ENCODE measurements at regions of chr9 and their contacts with region 1.

Region 1: GRCh38 chr9:123349691-123350480 is 6.1 kb upstream of the CRB2 start:
- DNase-seq: peak; percentile 68
- H3K4me3 ChIP-seq: no peak overlapping the region
- H3K27ac ChIP-seq: no peak overlapping the region
- H3K4me1 ChIP-seq: no peaks in the 10 kb centered on the region
- H3K27me3 ChIP-seq: no peaks in the 10 kb centered on the region
- CTCF ChIP-seq: peak; percentile 95

Region 2: GRCh38 chr9:123081824-123082223 is 268.1 kb before region 1 on chr9:
- intact Hi-C with region 1: loop called (anchors 5 kb)
- DNase-seq: no peak
- H3K4me3 ChIP-seq: no peak overlapping the region
- H3K27ac ChIP-seq: no peak overlapping the region
- H3K4me1 ChIP-seq: no peaks in the 10 kb centered on the region
- H3K27me3 ChIP-seq: no peaks in the 10 kb centered on the region
- CTCF ChIP-seq: peak; percentile 51

Region 3: DNA sequence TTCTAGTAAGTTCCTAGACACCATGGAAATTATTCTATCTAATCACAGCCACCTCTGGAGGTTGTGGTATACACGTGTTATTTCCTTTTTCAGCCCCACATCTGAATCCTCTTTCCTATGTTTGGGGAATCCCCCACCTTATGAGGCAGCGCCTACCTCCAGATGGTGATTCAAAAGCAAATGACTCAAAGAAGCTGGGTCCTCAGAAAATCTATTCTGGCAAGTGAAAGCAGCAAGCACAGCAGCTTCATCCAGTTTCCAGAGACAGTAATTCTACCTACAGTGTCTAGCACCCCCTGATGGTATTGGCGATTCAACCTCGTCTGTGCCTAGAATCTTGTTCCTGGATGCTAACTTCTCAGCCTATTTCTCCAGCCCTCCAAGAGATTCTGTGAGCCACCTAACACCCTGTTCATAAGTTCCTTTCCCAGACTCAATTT is 124.5 kb before region 1 on chr9:
- intact Hi-C with region 1: loop called (anchors 10 kb)
- DNase-seq: peak; percentile 30
- H3K4me3 ChIP-seq: no peak overlapping the region
- H3K27ac ChIP-seq: no peak overlapping the region
- H3K4me1 ChIP-seq: no peaks in the 10 kb centered on the region
- H3K27me3 ChIP-seq: no peaks in the 10 kb centered on the region
- CTCF ChIP-seq: peak; percentile 16

Region 4: DNA sequence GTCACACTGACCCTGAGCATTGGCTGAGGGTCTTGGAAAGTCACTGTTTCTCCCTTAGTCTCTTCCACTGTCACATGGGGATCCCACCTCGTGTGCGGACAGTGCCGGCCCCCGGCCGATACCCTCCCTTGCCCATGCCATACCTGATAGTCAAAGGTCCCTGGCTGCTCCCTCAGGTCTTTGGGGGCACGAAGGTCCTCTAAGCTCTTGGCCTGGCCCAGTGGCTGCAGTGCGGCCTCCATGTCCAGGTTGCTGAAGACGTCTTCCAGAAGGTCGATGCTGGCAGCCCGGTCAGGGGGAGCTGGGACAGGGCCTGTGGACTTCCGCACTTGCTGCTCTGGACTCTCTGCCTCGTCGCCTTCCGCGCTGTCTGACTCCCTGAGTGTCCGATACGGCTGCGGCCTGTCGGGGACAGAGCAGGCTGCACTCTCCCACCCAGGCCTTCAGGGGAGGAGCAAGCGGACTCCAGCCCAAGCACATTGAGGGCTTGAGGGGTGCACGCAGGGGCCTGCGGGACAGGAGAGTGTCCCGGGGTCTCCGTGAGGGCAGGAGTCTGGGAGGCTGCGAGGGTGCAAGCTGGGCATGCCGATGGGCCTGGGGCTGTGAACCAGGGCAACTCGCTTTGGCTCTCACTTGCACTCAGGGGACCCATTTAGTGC is 33.8 kb after region 1 on chr9:
- intact Hi-C with region 1: loop called (anchors 2 kb)
- DNase-seq: no peak
- H3K4me3 ChIP-seq: no peak overlapping the region
- H3K27ac ChIP-seq: no peak overlapping the region
- H3K4me1 ChIP-seq: no peaks in the 10 kb centered on the region
- H3K27me3 ChIP-seq: no peaks in the 10 kb centered on the region
- CTCF ChIP-seq: no peak

Measured in colonic mucosa (tissue), 4 donors.